ENCODE measurements at regions of chr18 and their contacts with region 1.

Region 1: DNA sequence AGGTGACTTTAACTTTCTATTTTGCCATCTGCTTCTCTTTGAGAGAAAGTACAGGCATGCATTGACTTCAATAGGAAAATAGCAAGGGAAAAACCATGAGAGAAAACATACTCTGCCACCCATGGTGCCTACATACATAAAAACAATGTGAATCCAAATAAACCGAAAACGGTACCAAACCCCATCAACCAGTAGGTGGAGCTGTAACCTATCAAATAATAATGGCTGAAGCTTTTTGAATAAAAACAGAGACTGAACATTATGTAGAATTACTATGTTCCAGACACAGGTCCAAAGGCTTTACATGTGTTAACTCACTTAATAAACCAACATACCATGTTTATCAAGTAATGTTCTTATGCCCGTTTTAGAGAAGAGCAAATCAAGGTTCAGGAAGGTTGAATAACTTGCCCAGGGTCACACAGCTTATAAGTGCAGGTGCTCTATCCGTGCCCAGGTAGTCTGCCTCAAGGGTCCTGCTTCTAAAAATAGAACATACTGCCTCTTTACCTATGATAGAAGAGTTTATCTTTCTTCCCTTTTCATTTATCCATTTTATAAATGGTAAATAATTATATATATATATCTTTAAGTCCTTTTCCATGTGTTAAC is 293.9 kb upstream of the SYT4 start:
- DNase-seq: peak; percentile 38
- ATAC-seq: no peak
- H3K4me3 Mint-ChIP-seq: no peak overlapping the region
- H3K27ac Mint-ChIP-seq: no peak overlapping the region
- H3K4me1 Mint-ChIP-seq: no peaks in the 10 kb centered on the region
- H3K27me3 Mint-ChIP-seq: no peaks in the 10 kb centered on the region

Region 2: DNA sequence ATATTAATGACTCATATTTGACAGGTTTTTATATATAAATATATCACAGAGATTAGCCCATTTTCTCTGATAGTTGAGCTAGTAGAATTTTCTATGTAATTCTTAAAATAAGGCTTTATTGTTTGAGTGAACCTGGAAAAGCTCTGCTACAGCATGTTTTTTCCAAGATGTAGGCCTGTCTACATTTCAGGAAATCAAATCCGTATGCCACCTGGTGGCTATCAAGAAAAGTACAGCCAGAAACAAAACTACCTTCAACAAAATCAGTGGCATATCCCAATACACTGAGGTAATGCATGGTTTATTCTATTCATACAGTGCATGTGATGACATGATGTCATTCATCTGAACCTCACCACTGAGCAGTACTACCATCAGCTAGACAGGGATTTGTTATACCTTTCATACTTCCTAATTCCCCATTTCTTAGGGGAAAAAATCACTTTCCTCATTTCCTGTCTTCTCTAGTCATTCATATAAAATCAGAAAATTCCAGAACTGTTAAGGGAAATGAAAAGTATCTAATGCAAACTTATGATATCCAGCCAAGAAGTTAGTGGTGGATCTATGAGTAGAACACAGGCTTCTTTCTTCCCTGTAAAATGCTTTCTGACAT is 16.5 kb after region 1 on chr18:
- CTCF ChIA-PET with region 1: interaction called, 22 read pairs
- POLR2A ChIA-PET with region 1: no interaction called
- DNase-seq: no peak
- ATAC-seq: no peak
- H3K4me3 Mint-ChIP-seq: no peak overlapping the region
- H3K27ac Mint-ChIP-seq: no peak overlapping the region
- H3K4me1 Mint-ChIP-seq: no peaks in the 10 kb centered on the region
- H3K27me3 Mint-ChIP-seq: no peaks in the 10 kb centered on the region

Region 3: DNA sequence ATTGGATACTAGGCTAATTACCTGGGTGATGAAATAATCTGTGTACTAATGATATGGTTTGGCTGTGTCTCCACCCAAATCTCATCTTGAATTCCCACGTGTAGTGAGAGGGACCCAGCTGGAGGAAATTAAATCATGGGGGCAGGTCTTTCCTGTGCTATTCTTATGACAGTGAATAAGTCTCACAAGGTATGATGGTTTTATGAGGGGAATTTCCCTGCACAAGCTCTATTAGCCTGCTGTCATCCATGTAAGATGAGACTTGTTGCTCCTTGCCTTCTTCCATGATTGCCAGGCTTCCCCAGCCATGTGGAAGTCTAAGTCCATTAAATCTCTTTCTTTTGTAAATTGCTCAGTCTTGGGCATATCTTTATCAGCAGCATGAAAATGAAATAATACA is 100.2 kb after region 1 on chr18:
- CTCF ChIA-PET with region 1: no interaction called
- POLR2A ChIA-PET with region 1: no interaction called
- DNase-seq: no peak
- ATAC-seq: no peak
- H3K4me3 Mint-ChIP-seq: no peak overlapping the region
- H3K27ac Mint-ChIP-seq: no peak overlapping the region
- H3K4me1 Mint-ChIP-seq: no peaks in the 10 kb centered on the region
- H3K27me3 Mint-ChIP-seq: no peaks in the 10 kb centered on the region